K562 (cell line): ENCODE measurements at regions of chr3 and their contacts with region 1.

Region 1: GRCh38 chr3:186930641-186931531 is 560 bp downstream of the ST6GAL1 start:
- DNase-seq: peak; percentile 69 to 86 (median 72)
- ATAC-seq: peak; percentile 86
- H3K4me3 ChIP-seq: peak overlapping the region; percentile 94
- H3K27ac ChIP-seq: peak overlapping the region; percentile 88
- H3K4me1 ChIP-seq: peaks cover 28 to 30% of the 10 kb centered on the region in 2 experiments
- H3K27me3 ChIP-seq: no peaks in the 10 kb centered on the region
- CTCF ChIP-seq: peak; percentile 30 to 80 (median 54); a peak in 5 of 6 replicates
- EP300 ChIP-seq: no peak
- POLR2A ChIP-seq: peak; percentile 63
- RAD21 ChIP-seq: peak; percentile 33 to 55

Region 2: DNA sequence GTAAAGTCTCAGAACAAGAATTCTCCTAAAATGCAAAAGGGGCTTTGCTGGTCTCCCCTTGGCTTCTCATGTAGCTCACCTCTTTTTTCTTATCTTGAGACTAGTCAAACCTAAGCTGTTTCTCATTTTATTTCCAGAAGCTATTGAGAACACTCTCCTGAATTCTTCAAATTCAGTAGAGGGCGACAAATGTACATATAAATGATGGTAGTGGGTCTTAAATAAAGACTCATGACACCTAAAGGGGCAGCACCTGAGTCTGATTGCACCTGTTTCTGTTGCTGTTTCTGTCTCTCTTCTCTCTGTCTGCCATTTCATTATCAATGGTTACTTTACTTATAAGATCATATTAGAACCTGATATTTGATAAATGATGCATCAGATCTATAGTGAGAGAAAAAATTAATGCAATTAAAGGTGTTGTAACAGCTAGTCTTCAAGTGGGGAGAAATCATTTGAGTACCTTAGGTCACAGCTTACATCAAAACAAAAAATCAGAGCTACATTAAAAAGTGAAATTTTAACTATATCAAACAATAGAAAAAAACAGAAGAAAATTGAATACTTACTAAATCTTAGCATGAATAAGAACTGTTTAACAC is 81.4 kb before region 1 on chr3:
- CTCF ChIA-PET with region 1: no interaction called
- POLR2A ChIA-PET with region 1: interaction called, 3 read pairs
- in situ Hi-C with region 1: loop called (anchors 5 kb)
- intact Hi-C with region 1: loop called (anchors 1 kb)
- DNase-seq: peak in 2 of 4 experiments; percentile 54 to 61
- ATAC-seq: peak; percentile 92
- H3K4me3 ChIP-seq: no peak overlapping the region
- H3K27ac ChIP-seq: no peak overlapping the region
- H3K4me1 ChIP-seq: no peaks in the 10 kb centered on the region; a peak in 1 of 5 replicates
- H3K27me3 ChIP-seq: no peaks in the 10 kb centered on the region
- CTCF ChIP-seq: peak; percentile 63 to 90 (median 77)
- EP300 ChIP-seq: peak; percentile 33; the same call in 1 of the 2 replicates
- POLR2A ChIP-seq: no peak
- RAD21 ChIP-seq: peak; percentile 96 to 98

Region 3: GRCh38 chr3:186909078-186909853 is 21.6 kb before region 1 on chr3:
- CTCF ChIA-PET with region 1: no interaction called
- POLR2A ChIA-PET with region 1: interaction called, 4 read pairs
- in situ Hi-C with region 1: no loop called
- intact Hi-C with region 1: loop called (anchors 1 kb)
- DNase-seq: peak; percentile 38 to 90 (median 46)
- ATAC-seq: peak; percentile 94
- H3K4me3 ChIP-seq: peak overlapping the region; percentile 18; the same call in 1 of the 2 replicates
- H3K27ac ChIP-seq: peak overlapping the region; percentile 94
- H3K4me1 ChIP-seq: peaks cover 6 to 9% of the 10 kb centered on the region in 2 experiments; a peak in 4 of 5 replicates
- H3K27me3 ChIP-seq: no peaks in the 10 kb centered on the region
- CTCF ChIP-seq: no peak; a peak in 1 of 6 replicates
- EP300 ChIP-seq: no peak; the same call in 1 of the 2 replicates
- POLR2A ChIP-seq: peak; percentile 75
- RAD21 ChIP-seq: no peak; a peak in 1 of 4 replicates

Region 4: GRCh38 chr3:186953011-186953487 is 22.2 kb after region 1 on chr3:
- CTCF ChIA-PET with region 1: no interaction called
- POLR2A ChIA-PET with region 1: interaction called, 4 read pairs
- in situ Hi-C with region 1: no loop called
- intact Hi-C with region 1: loop called (anchors 2 kb)
- DNase-seq: peak in 2 of 4 experiments; percentile 52 to 72
- ATAC-seq: peak; percentile 42
- H3K4me3 ChIP-seq: no peak overlapping the region
- H3K27ac ChIP-seq: peak overlapping the region; percentile 75
- H3K4me1 ChIP-seq: peaks cover 49 to 59% of the 10 kb centered on the region in 2 experiments
- H3K27me3 ChIP-seq: no peaks in the 10 kb centered on the region
- CTCF ChIP-seq: no peak
- EP300 ChIP-seq: peak; percentile 35; the same call in 1 of the 2 replicates
- POLR2A ChIP-seq: no peak; the same call in 1 of the 2 replicates
- RAD21 ChIP-seq: peak in 1 of 2 experiments; percentile 33; a peak in 2 of 4 replicates

Region 5: DNA sequence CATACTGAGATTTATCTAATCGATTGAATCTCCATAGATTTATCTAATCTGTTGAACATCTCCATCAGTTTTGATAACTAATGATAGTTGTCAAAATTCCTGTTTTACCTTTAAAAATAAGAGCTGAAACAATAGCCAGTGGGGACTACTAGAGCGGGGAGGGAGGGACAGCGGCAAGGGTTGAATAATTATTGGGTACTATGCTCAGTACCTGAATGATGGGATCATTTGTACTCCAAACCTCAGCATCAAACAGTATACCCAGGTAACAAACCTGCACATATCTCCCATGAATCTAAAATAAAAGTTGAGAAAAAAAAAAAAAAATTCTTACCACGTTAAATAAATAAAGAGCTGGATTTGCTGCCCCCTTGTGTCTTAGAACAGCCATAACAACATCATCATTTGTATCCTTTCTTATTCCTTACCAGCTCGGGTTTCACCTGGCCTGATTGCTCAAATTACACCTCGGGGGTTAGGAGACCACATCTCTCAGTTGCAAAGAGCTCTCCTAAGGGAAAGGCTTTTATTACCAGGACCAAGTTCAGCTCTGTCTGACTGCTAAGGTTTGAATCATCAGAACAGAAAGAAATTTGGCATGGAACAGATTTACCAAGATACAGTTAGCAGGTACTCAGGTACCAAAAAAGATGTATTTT is 234.1 kb after region 1 on chr3:
- CTCF ChIA-PET with region 1: interaction called, 3 read pairs
- POLR2A ChIA-PET with region 1: interaction called, 3 read pairs
- in situ Hi-C with region 1: no loop called
- intact Hi-C with region 1: loop called (anchors 10 kb)
- DNase-seq: peak; percentile 53 to 70 (median 64)
- ATAC-seq: peak; percentile 78
- H3K4me3 ChIP-seq: no peak overlapping the region
- H3K27ac ChIP-seq: no peak overlapping the region
- H3K4me1 ChIP-seq: no peaks in the 10 kb centered on the region
- H3K27me3 ChIP-seq: peaks cover 0 to 6% of the 10 kb centered on the region in 2 experiments; a peak in 1 of 5 replicates
- CTCF ChIP-seq: peak; percentile 61 to 75 (median 64); a peak in 5 of 6 replicates
- EP300 ChIP-seq: no peak
- POLR2A ChIP-seq: no peak
- RAD21 ChIP-seq: peak; percentile 67 to 77